ENCODE measurements at regions of chr10 and their contacts with region 1.

Region 1: DNA sequence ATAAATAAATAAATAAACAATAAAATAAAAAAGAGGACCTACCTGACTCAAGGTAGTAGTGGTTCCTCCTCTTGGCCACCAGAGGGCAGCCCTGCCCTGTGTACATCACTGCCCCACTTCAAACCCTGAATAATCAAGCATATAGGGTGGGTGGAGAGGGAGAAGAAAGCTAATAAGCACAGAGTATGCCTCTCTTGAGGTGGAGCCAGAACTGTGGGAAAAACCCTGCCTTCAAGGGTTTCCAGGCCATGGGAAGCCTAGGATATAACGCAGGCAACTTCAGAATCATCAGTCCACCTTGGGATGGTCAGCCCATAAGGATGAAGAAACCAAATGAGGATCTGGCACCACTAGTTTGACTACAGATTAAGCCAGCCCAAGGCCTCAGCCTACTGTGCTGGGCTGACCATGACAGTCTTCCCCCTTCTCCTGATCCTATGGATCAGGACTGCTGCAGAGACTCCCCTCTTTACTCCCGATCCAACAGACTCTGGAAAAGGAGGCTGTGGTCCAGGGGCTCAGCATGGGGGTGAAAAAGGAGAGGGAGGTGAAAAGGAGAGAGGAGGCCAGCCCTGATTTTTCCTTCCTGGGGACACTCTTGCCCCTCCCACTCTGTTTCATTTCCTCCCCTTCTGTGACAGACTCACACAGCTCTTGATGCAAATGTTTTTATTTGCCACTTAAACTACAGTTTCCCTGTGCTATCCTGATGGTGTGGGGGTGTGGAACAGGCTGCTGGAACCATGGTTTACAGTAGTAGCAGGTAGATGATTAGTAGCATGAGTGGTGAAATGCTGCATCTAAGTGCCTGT is 10.1 kb downstream of the AVPI1 start:
- DNase-seq: peak; percentile 61
- H3K4me3 ChIP-seq: no peak overlapping the region
- H3K27ac ChIP-seq: no peak overlapping the region
- H3K4me1 ChIP-seq: peaks cover 3% of the 10 kb centered on the region
- H3K27me3 ChIP-seq: no peaks in the 10 kb centered on the region
- CTCF ChIP-seq: peak; percentile 78 to 80
- POLR2A ChIP-seq: peak; percentile 15

Region 2: GRCh38 chr10:97534746-97535367 is 142.1 kb before region 1 on chr10:
- CTCF ChIA-PET with region 1: no interaction called
- POLR2A ChIA-PET with region 1: no interaction called
- dilution Hi-C with region 1: no loop called
- intact Hi-C with region 1: no loop called
- DNase-seq: peak; percentile 55
- H3K4me3 ChIP-seq: no peak overlapping the region
- H3K27ac ChIP-seq: no peak overlapping the region
- H3K4me1 ChIP-seq: peaks cover 9% of the 10 kb centered on the region
- H3K27me3 ChIP-seq: no peaks in the 10 kb centered on the region
- CTCF ChIP-seq: peak; percentile 64 to 82
- POLR2A ChIP-seq: no peak

Region 3: GRCh38 chr10:97596101-97597062 is 80.6 kb before region 1 on chr10:
- CTCF ChIA-PET with region 1: no interaction called
- POLR2A ChIA-PET with region 1: no interaction called
- dilution Hi-C with region 1: no loop called
- intact Hi-C with region 1: no loop called
- DNase-seq: peak; percentile 98
- H3K4me3 ChIP-seq: no peak overlapping the region
- H3K27ac ChIP-seq: peak overlapping the region; percentile 82
- H3K4me1 ChIP-seq: peaks cover 25% of the 10 kb centered on the region
- H3K27me3 ChIP-seq: no peaks in the 10 kb centered on the region
- CTCF ChIP-seq: no peak
- POLR2A ChIP-seq: peak; percentile 66

Region 4: GRCh38 chr10:97664282-97664850 is 12.6 kb before region 1 on chr10:
- CTCF ChIA-PET with region 1: interaction called, 10 read pairs
- POLR2A ChIA-PET with region 1: no interaction called
- dilution Hi-C with region 1: no loop called
- intact Hi-C with region 1: no loop called
- DNase-seq: peak; percentile 40
- H3K4me3 ChIP-seq: no peak overlapping the region
- H3K27ac ChIP-seq: no peak overlapping the region
- H3K4me1 ChIP-seq: no peaks in the 10 kb centered on the region
- H3K27me3 ChIP-seq: no peaks in the 10 kb centered on the region
- CTCF ChIP-seq: no peak
- POLR2A ChIP-seq: no peak

Region 5: GRCh38 chr10:97701438-97702069 is 24.6 kb after region 1 on chr10:
- CTCF ChIA-PET with region 1: interaction called, 98 read pairs
- POLR2A ChIA-PET with region 1: no interaction called
- dilution Hi-C with region 1: no loop called
- intact Hi-C with region 1: loop called (anchors 1 kb)
- DNase-seq: peak; percentile 70
- H3K4me3 ChIP-seq: no peak overlapping the region
- H3K27ac ChIP-seq: no peak overlapping the region
- H3K4me1 ChIP-seq: no peaks in the 10 kb centered on the region
- H3K27me3 ChIP-seq: peaks cover 2 to 6% of the 10 kb centered on the region in 2 experiments
- CTCF ChIP-seq: peak; percentile 79 to 85
- POLR2A ChIP-seq: no peak

Region 6: DNA sequence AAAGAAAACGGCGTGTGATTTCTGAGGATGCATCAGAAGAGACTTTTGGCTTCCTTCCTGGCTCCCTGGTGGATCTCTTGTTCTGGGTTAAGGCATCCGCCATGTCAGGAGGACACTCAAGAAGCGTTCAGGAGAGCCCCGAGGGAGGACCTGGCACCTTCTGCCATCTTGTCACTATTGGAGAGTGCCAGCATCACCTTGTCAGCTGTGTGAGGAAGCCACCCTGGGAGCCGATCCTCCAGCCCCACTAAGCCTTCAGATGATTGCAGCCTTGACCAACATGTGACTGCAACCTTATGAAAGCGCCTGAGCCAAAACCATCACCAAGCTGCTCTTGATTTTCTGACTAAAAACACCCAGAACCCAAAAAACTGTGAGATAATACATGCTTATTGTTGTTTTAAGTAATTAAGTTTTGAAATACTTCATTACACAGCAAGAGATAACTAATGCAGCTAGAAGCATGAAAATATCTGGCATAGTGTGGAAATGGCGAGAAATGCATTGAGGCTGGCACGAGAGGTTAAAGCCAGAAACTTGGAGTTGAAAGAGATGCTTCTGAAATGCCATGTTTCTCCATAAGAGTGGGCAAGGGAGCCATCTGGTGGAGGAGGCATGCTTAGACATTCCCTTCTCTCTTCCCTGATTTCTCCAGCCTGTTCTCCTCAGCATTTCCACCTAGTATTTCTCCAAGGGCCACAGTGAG is 54.5 kb after region 1 on chr10:
- CTCF ChIA-PET with region 1: interaction called, 58 read pairs
- POLR2A ChIA-PET with region 1: no interaction called
- dilution Hi-C with region 1: no loop called
- intact Hi-C with region 1: loop called (anchors 1 kb)
- DNase-seq: peak; percentile 79
- H3K4me3 ChIP-seq: no peak overlapping the region
- H3K27ac ChIP-seq: no peak overlapping the region
- H3K4me1 ChIP-seq: peaks cover 6% of the 10 kb centered on the region
- H3K27me3 ChIP-seq: no peaks in the 10 kb centered on the region
- CTCF ChIP-seq: peak; percentile 82
- POLR2A ChIP-seq: no peak

Region 7: GRCh38 chr10:97771055-97771811 is 94.3 kb after region 1 on chr10:
- CTCF ChIA-PET with region 1: no interaction called
- POLR2A ChIA-PET with region 1: no interaction called
- dilution Hi-C with region 1: no loop called
- intact Hi-C with region 1: no loop called
- DNase-seq: peak; percentile 20
- H3K4me3 ChIP-seq: no peak overlapping the region
- H3K27ac ChIP-seq: no peak overlapping the region
- H3K4me1 ChIP-seq: no peaks in the 10 kb centered on the region
- H3K27me3 ChIP-seq: peaks cover 40 to 42% of the 10 kb centered on the region in 2 experiments
- CTCF ChIP-seq: no peak
- POLR2A ChIP-seq: no peak